Activated B cell treated with CpG ODN at 0.5 μM for 24 hours (primary cell): ENCODE measurements at regions of chr2 and their contacts with region 1.

Region 1: DNA sequence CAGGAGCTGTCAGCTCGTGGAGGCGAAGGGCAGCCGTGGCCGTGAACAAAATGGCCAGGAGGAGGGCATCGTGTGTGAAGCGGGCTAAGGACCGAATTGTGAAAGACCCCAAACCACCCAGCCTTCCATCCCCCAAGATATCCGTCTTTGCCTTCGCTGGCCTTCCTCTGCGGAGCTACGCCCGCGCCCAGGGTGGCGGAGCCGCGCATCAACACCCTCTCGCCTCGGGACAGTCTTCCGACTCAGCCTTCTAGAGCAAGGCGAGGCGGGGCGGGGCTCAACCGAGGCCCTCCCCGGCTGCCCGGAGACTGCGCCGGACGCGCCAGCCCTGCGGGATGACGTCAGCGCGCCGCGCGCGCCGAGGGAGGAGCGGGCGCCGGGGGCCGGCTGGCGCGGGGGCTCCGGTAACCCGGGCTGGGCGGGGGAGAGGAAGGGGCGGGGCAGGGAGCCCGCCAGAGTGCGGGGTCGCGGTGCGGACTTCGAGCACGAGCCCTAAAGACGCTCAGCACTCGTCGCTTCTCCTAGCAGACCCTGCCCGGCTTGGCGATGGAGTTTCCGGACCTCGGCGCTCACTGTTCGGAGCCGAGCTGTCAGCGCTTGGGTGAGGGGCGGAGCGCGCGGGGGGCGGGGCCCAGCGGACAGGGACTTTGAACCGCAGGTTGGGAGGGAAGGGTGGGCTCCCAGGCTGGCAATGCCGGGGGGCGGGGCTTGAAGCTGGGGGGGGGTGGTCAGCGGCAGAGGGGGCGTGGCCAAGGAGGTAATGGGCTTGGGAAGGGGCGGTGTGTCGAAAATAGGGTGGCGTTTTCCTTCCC is at the start of gene ZFAND2B:
- DNase-seq: peak; percentile 99
- ATAC-seq: peak; percentile 93
- H3K4me3 Mint-ChIP-seq: peak within 1 kb of the TSS; percentile 88
- H3K27ac Mint-ChIP-seq: peak within 1 kb of the TSS; percentile 95
- H3K4me1 Mint-ChIP-seq: peaks cover 26% of the 10 kb centered on the region
- H3K27me3 Mint-ChIP-seq: no peaks in the 10 kb centered on the region
- CTCF ChIP-seq: no peak
- total RNA-seq, gene ZFAND2B: 39.9 and 47.2 TPM in 2 replicates

Region 2: DNA sequence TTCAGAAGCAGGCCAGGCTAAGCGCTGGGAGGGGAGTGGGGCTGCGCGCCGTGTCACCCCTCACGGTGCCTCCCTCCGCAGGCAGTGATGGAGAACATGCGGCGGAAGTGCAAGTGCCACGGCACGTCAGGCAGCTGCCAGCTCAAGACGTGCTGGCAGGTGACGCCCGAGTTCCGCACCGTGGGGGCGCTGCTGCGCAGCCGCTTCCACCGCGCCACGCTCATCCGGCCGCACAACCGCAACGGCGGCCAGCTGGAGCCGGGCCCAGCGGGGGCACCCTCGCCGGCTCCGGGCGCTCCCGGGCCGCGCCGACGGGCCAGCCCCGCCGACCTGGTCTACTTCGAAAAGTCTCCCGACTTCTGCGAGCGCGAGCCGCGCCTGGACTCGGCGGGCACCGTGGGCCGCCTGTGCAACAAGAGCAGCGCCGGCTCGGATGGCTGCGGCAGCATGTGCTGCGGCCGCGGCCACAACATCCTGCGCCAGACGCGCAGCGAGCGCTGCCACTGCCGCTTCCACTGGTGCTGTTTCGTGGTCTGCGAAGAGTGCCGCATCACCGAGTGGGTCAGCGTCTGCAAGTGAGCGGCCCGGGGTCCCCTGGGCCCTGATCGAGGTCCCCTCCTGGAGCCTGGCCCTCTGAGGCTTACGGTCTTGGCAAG is 313.8 kb before region 1 on chr2:
- CTCF ChIA-PET with region 1: no interaction called
- POLR2A ChIA-PET with region 1: no interaction called
- intact Hi-C with region 1: loop called (anchors 2 kb)
- DNase-seq: peak; percentile 91
- ATAC-seq: peak; percentile 66
- H3K4me3 Mint-ChIP-seq: peak overlapping the region; percentile 80
- H3K27ac Mint-ChIP-seq: peak overlapping the region; percentile 92
- H3K4me1 Mint-ChIP-seq: peaks cover 59% of the 10 kb centered on the region
- H3K27me3 Mint-ChIP-seq: no peaks in the 10 kb centered on the region
- CTCF ChIP-seq: no peak

Region 3: DNA sequence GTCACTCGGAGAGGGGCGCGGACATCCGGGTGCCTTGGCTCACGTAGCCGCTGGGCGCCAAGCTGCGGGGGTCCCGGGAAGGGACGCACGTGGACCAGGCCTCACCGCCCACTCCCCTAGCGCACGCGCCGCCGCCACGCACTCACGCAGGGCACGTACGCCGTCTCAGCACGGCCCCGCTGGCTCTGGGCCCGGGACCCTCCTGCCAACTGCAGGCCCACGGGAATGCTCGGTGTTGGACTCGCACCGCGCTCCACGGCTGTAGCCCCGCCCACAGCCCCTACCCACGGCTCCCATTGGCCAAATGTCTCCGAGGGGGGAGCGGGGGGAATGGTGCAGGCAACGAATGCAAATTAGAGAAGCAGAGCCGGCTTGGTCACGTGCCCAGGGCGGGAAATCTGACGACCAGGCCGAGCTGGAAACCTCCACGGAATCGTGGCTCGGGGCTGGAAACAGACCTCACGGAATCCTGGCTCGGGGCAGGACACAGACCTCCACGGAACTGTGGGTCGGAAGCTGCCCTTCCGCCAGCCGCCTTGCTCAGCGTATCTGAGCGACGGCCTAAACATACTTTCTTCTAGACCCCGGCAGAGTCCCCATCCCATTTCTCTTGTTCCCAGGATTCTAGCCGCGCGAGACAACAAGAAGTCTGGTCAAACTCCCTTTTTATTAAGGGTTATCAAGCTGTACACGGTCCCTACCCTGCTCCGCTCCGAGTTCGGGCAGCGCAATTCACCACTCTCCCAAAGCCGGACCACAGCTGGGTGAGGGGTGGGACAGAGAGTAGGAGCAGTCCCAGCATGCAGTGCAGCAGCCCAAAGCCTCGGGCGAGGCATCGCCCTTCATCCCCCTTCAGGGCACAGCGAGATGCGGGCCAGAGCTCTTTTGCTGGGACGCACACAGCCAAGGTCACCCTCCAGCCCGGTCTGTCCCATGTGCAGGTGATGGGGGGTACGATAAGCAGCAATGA is 12.4 kb after region 1 on chr2 and contains the start of gene ABCB6:
- CTCF ChIA-PET with region 1: interaction called, 5 read pairs
- POLR2A ChIA-PET with region 1: interaction called, 30 read pairs
- intact Hi-C with region 1: loop called (anchors 1 kb)
- DNase-seq: peak; percentile 82
- ATAC-seq: peak; percentile 95
- H3K4me3 Mint-ChIP-seq: peak within 1 kb of the TSS; percentile 81
- H3K27ac Mint-ChIP-seq: peak within 1 kb of the TSS; percentile 74
- H3K4me1 Mint-ChIP-seq: peaks cover 19% of the 10 kb centered on the region
- H3K27me3 Mint-ChIP-seq: no peaks in the 10 kb centered on the region
- CTCF ChIP-seq: no peak
- total RNA-seq, gene ABCB6: 12.1 and 16.6 TPM in 2 replicates

Region 4: GRCh38 chr2:219245148-219245898 is 38.7 kb after region 1 on chr2 and contains the starts of genes GLB1L and STK16:
- CTCF ChIA-PET with region 1: interaction called, 5 read pairs
- POLR2A ChIA-PET with region 1: interaction called, 25 read pairs
- intact Hi-C with region 1: loop called (anchors 2 kb)
- DNase-seq: peak; percentile 95
- ATAC-seq: peak; percentile 64
- H3K4me3 Mint-ChIP-seq: peak within 1 kb of the TSS; percentile 90
- H3K27ac Mint-ChIP-seq: peak within 1 kb of the TSS; percentile 98
- H3K4me1 Mint-ChIP-seq: peaks cover 57% of the 10 kb centered on the region
- H3K27me3 Mint-ChIP-seq: no peaks in the 10 kb centered on the region
- CTCF ChIP-seq: no peak
- total RNA-seq, gene GLB1L: 4.5 and 4.6 TPM in 2 replicates
- total RNA-seq, gene STK16: 31.0 and 36.5 TPM in 2 replicates

Region 5: GRCh38 chr2:219294356-219295351 is 88.0 kb after region 1 on chr2:
- CTCF ChIA-PET with region 1: interaction called, 6 read pairs
- POLR2A ChIA-PET with region 1: interaction called, 26 read pairs
- intact Hi-C with region 1: loop called (anchors 1 kb)
- DNase-seq: peak; percentile 91
- ATAC-seq: peak; percentile 95
- H3K4me3 Mint-ChIP-seq: peak overlapping the region; percentile 78
- H3K27ac Mint-ChIP-seq: peak overlapping the region; percentile 65
- H3K4me1 Mint-ChIP-seq: peaks cover 24% of the 10 kb centered on the region
- H3K27me3 Mint-ChIP-seq: peaks cover 6% of the 10 kb centered on the region
- CTCF ChIP-seq: peak; percentile 64

Region 6: GRCh38 chr2:219331560-219332213 is 125.0 kb after region 1 on chr2:
- CTCF ChIA-PET with region 1: no interaction called
- POLR2A ChIA-PET with region 1: no interaction called
- intact Hi-C with region 1: no loop called
- DNase-seq: no peak
- ATAC-seq: no peak
- H3K4me3 Mint-ChIP-seq: no peak overlapping the region
- H3K27ac Mint-ChIP-seq: no peak overlapping the region
- H3K4me1 Mint-ChIP-seq: no peaks in the 10 kb centered on the region
- H3K27me3 Mint-ChIP-seq: peaks cover 79% of the 10 kb centered on the region
- CTCF ChIP-seq: no peak

Region 7: GRCh38 chr2:219769090-219769910 is 562.7 kb after region 1 on chr2:
- CTCF ChIA-PET with region 1: no interaction called
- POLR2A ChIA-PET with region 1: no interaction called
- intact Hi-C with region 1: no loop called
- DNase-seq: no peak
- ATAC-seq: no peak
- H3K4me3 Mint-ChIP-seq: no peak overlapping the region
- H3K27ac Mint-ChIP-seq: no peak overlapping the region
- H3K4me1 Mint-ChIP-seq: no peaks in the 10 kb centered on the region
- H3K27me3 Mint-ChIP-seq: no peaks in the 10 kb centered on the region
- CTCF ChIP-seq: no peak